Activated naive CD8-positive, alpha-beta T cell treated with anti-CD3 and anti-CD28 coated beads, Interleukin-2, amount 10 ng/mL, durations not matched to agents 7 days and 5 days (primary cell): ENCODE measurements at regions of chr2 and their contacts with region 1.

Region 1: DNA sequence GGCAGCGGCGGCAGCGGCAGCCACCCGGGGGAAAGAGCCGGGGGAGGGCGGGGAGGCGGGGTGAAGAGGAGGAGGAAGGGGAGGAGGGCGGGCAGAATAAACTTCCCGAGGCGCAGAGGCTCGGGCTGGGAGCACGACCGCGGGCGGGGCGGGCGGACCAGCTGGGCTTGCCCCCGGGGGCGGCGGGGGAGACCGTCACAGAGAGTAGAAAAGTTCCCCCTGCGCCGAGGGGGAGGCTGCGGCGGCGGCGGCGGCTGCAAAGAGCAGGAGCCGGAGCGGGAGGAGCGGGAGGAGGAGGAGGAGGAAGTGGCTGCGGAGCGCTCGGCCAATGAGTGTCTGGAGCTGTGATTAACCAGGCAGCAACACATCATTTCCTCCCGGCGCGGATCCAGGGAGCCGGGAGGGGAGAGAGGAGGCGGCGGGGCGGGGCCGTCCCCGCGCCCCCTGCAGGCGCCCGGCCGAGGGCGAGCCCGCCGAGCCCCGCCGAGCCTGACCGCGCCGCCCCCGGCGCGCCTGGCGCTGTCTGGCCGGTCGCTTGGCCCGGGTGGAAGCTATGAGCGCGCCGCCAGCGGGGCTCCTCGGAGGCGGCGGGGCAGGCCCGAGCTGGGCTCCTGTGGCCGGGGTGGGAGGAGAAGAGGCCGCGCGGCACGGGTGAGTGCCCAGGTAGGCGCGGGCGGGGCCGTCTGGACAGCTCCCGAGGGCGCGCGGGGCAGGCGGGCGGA is at the start of gene ACVR1:
- DNase-seq: peak; percentile 85
- ATAC-seq: peak; percentile 84
- H3K4me3 Mint-ChIP-seq: peak within 1 kb of the TSS; percentile 94
- H3K27ac Mint-ChIP-seq: peak within 1 kb of the TSS; percentile 91
- H3K4me1 Mint-ChIP-seq: peaks cover 39% of the 10 kb centered on the region
- H3K27me3 Mint-ChIP-seq: no peaks in the 10 kb centered on the region
- total RNA-seq, gene ACVR1: 13.4 to 16.1 TPM

Region 2: DNA sequence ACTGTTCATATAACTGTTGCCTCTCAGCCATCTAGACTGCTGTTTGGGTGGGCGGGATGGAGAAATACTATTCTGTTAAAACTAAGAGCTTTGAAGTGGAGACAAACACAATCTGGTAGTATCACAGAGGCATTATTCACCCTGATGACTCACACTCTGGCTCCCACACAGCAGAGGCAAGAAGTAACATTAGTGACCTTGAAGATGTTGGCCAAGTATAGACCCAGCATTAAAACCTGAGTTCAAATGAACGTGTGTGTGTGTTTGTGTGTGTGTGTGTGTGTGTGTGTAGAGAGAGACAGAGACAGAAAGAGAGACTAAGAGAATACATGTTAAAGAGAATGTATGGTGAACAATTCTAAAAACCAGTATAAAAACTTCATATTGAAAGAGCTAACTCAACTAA is 22.4 kb after region 1 on chr2:
- POLR2A ChIA-PET with region 1: interaction called, 89 read pairs
- DNase-seq: no peak
- ATAC-seq: peak; percentile 62
- H3K4me3 Mint-ChIP-seq: peak overlapping the region; percentile 97
- H3K27ac Mint-ChIP-seq: peak overlapping the region; percentile 100
- H3K4me1 Mint-ChIP-seq: peaks cover 60% of the 10 kb centered on the region
- H3K27me3 Mint-ChIP-seq: no peaks in the 10 kb centered on the region